Endothelial cell of umbilical vein (primary cell): ENCODE measurements at regions of chr11 and their contacts with region 1.

Region 1: DNA sequence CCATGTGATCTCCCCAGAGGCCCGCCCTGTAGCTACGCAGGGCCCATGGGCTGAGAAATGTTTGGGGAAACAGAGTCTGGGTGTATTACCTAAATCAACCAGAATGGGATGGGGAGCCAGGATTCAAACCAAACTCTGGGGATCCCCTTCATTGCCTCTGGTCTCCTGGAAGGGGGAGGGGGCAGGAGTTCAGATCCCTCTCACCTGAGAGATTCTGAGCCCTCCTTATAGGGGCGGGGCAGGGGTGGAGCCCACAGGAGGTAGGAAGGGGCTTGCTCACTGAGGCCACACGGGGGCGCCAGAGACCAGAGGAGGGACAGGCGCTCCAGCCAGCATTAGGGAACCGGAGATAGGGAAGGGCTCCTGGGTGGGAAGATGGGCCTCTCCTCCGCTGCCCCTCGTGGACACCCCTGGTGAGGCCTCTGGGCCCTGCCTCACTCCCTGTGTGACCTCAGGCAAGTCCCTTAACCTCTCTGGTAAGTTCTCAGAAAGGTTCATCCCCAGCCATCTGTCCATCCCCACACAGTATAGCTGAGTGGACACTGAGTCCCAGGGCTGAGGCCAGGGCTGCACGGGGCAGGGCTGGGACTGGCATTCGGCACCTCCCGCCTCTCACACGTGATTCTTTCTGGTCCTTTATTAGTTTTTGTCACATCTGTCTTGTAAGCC is 2.7 kb upstream of the CDC42BPG start:
- DNase-seq: peak; percentile 85
- H3K4me3 ChIP-seq: no peak overlapping the region
- H3K27ac ChIP-seq: no peak overlapping the region
- H3K4me1 ChIP-seq: no peaks in the 10 kb centered on the region
- H3K27me3 ChIP-seq: no peaks in the 10 kb centered on the region
- CTCF ChIP-seq: peak; percentile 87 to 96
- POLR2A ChIP-seq: no peak

Region 2: DNA sequence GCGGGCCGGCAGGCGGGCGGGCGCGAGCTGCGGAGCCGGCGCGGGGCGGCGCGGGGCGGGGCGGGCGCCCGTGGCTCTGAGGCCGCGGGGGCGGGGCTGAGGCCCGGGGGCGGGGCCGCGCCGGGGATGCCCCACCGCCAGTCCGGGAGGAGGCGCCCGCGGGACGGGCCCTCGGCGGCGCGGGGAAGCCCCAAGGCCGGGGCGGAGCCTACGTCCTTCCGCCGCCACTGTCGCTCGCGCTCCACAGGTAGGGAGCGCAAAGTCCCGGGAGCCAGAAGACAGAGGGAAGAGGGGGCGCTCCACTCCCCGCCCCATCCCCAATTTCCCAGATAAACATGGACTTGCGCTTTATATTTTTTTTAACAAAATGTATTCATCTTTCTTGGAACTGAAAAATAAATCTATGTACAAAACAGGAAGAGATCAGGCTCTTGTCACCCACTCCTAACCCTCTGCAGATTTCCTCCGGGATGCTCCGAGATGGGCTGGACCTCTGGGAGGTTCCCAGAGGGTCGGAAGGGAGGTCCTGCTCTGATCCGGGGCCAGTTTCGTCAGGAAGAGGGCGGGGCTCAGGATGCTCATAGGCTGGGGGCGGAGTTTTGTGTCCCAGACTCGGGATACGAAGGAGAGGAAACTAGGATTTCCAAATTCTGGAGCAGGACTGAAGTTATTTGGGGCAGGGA is 43.8 kb before region 1 on chr11 and contains the start of gene MAP4K2:
- CTCF ChIA-PET with region 1: interaction called, 8 read pairs
- POLR2A ChIA-PET with region 1: no interaction called
- dilution Hi-C with region 1: no loop called
- intact Hi-C with region 1: loop called (anchors 2 kb)
- DNase-seq: peak; percentile 74
- H3K4me3 ChIP-seq: peak within 1 kb of the TSS; percentile 59 to 87 (median 70)
- H3K27ac ChIP-seq: peak within 1 kb of the TSS; percentile 75
- H3K4me1 ChIP-seq: peaks cover 36% of the 10 kb centered on the region
- H3K27me3 ChIP-seq: no peaks in the 10 kb centered on the region
- CTCF ChIP-seq: peak; percentile 5 to 28
- POLR2A ChIP-seq: no peak
- total RNA-seq, gene MAP4K2: 43.3 and 48.5 TPM in 2 replicates

Region 3: GRCh38 chr11:64864473-64865285 is 17.5 kb after region 1 on chr11:
- CTCF ChIA-PET with region 1: interaction called, 55 read pairs
- POLR2A ChIA-PET with region 1: interaction called, 4 read pairs
- dilution Hi-C with region 1: no loop called
- intact Hi-C with region 1: no loop called
- DNase-seq: peak; percentile 53
- H3K4me3 ChIP-seq: no peak overlapping the region
- H3K27ac ChIP-seq: peak overlapping the region; percentile 74
- H3K4me1 ChIP-seq: peaks cover 45% of the 10 kb centered on the region
- H3K27me3 ChIP-seq: no peaks in the 10 kb centered on the region
- CTCF ChIP-seq: no peak
- POLR2A ChIP-seq: no peak

Region 4: DNA sequence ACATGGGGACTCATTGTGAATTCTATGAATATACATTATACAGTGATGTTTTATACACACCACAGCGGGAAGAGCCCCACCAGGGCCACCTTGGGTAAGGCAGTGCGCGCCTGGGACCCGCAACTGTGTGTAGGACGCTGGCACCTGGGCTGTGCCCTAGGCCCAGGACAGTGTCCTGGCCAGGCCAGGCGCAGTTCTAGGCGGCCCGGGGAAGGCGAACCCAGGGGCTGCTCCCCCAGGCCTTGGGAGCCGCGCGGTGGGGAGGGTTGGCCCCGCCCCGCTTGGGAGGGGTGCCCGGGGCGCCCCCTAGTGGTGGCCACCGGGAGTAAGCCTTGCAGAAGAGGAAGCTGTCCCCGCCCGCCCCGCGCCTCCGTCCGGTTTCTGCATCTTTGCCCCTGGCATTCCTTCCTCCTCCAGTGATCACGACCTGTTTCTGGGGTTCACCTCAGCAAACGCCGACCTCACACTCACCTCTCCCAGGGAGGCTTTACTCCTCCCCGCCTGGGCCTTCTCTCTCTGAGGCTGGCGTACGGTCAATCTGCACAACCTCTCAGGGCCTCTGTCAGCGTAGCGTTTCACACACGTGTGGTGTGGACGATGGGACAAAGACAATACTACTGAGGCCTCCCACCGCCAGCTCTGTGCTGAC is 40.7 kb after region 1 on chr11:
- CTCF ChIA-PET with region 1: interaction called, 168 read pairs
- POLR2A ChIA-PET with region 1: no interaction called
- dilution Hi-C with region 1: loop called (anchors 10 kb)
- intact Hi-C with region 1: loop called (anchors 1 kb)
- DNase-seq: peak; percentile 62
- H3K4me3 ChIP-seq: no peak overlapping the region
- H3K27ac ChIP-seq: no peak overlapping the region
- H3K4me1 ChIP-seq: peaks cover 12% of the 10 kb centered on the region
- H3K27me3 ChIP-seq: no peaks in the 10 kb centered on the region
- CTCF ChIP-seq: peak; percentile 92 to 99
- POLR2A ChIP-seq: peak; percentile 37

Region 5: GRCh38 chr11:64996710-64997380 is 149.7 kb after region 1 on chr11 and contains the start of gene BATF2:
- CTCF ChIA-PET with region 1: interaction called, 18 read pairs
- POLR2A ChIA-PET with region 1: no interaction called
- dilution Hi-C with region 1: no loop called
- intact Hi-C with region 1: loop called (anchors 1 kb)
- DNase-seq: peak; percentile 73
- H3K4me3 ChIP-seq: peak within 1 kb of the TSS in 1 of 3 experiments; percentile 14
- H3K27ac ChIP-seq: no peak within 1 kb of the TSS
- H3K4me1 ChIP-seq: no peaks in the 10 kb centered on the region
- H3K27me3 ChIP-seq: no peaks in the 10 kb centered on the region
- CTCF ChIP-seq: peak; percentile 39 to 65
- POLR2A ChIP-seq: no peak
- total RNA-seq, gene BATF2: 0.75 and 0.81 TPM in 2 replicates